ENCODE measurements at regions of chr3 and their contacts with region 1.

Region 1: DNA sequence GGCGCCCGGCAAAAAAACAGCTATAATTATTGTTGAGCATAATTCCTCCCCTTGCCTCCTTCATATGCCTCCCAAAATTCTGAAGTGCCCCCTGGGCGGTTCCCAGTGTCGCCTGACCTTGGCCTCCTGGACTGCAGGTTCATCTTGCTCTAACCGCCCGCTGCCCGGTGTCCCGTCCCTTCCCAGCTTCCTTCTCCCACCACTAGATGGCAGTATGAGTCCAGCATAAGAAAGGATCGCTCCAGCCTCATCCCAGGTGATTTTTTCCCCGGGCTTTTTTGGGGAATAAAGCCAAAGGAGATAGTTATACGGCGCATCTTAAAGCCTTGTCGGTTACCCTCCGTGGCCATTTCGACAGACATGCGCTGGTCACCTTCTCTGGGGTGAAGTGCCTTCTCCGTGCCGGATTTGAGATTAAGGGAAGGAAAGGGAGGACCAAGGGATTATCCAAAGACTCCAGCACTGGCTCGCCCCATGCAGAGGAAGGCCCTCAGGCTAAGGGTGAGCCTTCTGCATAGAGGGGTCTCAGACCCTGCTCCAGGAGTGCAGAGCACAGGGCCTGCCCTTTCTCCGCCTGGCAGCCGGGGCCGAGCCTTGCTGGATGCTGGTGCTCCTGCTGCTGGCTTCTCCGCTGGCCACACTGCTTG is 45.8 kb upstream of the TRA2B start:
- DNase-seq: peak in 9 of 10 donors; percentile 52 to 94 (median 76)

Region 2: DNA sequence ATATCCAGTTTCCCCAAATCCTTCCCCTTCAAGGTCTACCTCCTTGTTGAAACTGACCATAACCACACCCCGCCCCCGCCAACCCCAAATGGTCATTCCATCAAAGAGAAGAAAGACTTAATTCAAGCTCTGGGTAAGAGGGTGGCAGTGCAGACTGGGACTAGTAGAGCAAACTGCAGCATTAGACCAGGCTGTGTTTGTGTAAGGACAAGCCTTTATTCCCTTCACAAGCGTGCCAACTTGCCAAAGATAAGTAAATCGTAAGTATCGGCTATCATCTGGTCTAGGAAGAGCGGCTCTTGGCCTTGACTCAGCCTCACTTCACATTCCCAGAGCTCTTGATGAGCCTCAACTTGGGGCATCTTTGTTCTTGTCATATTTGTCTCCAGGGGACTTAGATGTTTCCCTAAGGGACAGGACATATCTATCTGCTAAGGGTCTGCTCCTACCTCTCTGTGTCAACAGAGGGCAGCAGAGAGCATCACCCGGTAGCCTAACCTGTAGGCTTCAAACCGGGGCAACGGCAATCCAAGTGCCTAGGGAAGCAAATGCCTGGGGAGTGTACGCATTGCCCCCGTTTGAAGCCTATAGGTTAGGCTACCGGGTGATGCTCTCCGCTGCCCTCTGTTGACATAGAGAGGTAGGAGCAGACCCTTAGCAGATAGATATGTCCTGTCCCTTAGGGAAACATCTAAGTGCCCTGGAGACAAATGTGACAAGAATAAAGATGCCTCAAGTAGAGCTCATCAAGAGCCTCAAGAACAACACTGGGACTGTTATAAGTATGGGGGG is 629.6 kb before region 1 on chr3:
- intact Hi-C with region 1: no loop called
- DNase-seq: peak in 5 of 10 donors; percentile 32 to 65 (median 61)

Region 3: DNA sequence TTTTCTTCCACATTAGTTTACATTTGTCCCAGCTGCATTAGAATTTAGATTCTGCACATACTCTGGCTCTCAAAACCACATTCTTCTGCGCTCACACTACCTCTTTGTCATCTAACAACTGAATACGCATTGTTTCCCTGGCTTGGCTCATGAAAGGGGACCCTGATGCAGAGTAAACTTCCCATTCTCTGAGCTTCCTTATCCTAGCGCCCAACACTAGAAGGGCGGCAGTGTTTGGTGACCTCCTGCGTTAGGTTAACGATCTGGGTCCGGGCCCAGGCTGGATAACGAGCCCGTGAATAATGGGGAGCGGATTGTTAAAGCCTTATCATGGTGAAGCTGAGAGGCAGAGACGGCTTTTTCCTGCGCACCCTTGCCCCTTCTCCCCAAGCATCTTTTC is 61.4 kb after region 1 on chr3:
- intact Hi-C with region 1: loop called (anchors 2 kb)
- DNase-seq: peak in 8 of 10 donors; percentile 56 to 94 (median 66)

Region 4: DNA sequence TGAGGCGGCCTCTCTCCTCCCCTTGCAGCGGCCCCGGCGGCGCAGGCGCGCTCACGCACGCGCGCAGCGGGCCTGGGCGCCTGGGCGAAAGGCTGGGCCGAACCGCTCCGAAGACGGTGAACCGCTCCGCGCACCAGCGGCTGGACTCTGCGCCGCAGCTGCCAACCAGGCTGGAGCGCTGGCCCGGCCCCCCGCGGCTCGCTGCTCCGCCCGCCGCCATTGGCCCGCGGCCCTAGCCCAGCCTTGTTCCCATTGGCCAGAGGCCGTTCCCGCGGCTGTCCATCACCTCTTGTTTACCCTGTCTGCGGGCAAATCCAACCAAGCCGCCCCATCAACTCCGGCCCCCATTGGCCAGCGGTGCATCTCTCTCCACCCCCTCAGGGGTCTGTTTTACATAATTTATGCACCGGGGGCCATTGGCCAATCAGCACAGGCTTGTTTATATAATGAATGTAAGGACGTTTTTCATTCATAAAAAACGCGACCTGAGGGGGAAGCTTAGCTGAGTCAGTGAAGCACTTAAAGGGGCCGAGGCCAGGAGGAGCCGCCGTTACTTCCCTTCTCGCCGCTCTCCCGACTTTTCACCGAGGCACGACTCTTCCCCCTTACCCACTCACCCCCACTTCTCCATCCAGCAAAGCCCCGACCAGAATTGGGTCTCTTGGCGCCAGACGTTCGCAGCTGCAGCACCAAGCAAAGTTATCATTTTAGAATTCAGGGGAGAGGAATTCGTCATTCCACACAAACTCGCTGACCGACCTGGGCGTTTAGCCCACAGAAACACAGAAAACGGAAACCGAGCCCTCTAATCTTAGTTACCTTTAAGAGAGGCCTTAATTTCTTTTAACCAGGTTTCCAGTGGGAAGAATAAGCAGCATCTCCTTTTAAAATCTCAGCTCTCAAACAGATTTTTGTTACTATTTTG is 125.6 kb after region 1 on chr3 and contains the start of gene ETV5:
- intact Hi-C with region 1: loop called (anchors 5 kb)
- DNase-seq: peak; percentile 99 to 100 (median 100)

Region 5: DNA sequence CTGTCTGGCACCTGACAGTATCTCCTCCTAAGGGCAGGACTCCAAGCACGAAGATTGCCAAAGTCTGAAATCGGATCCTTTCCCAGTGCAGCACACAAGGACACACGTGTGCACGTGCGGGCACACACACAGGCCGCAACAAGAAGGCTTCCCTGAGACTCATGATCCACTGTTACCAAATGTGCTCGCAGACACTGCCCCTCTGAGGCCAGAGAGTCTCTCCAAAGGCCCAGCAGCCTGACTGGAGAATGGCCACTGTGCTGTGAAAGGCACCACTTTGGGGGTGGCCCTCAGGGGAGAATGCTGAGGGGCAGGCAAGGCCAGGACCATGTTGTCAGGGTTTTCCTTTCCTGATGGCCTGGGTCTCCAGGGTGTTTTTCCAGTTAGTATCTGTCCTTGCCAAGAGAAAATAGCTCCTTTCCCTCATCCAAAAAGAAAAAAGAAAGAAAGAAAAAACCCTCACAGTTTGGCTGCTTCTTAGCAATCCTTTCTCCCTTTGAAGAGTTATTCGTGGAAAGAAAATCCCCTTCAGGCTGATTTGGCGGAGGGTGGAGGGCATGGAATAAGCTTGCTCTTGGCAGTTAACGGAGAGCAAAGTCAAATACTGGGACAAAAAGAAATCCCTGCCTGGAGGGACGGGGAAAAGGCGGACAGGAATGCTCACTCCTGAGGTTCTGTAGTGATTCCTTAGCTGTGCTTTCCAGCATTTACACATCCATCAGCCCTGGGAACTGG is 237.5 kb after region 1 on chr3:
- intact Hi-C with region 1: loop called (anchors 5 kb)
- DNase-seq: peak; percentile 48 to 95 (median 66)

Region 6: GRCh38 chr3:186241910-186242821 is 258.5 kb after region 1 on chr3:
- intact Hi-C with region 1: loop called (anchors 1 kb)
- DNase-seq: peak in 8 of 10 donors; percentile 54 to 93 (median 64)

Region 7: GRCh38 chr3:186277268-186277909 is 293.8 kb after region 1 on chr3:
- intact Hi-C with region 1: loop called (anchors 2 kb)
- DNase-seq: peak in 3 of 10 donors; percentile 27 to 81 (median 32)

Region 8: GRCh38 chr3:186413615-186414415 is 430.2 kb after region 1 on chr3:
- intact Hi-C with region 1: no loop called
- DNase-seq: peak; percentile 28 to 92 (median 68)